MCF 10A (cell line): ENCODE measurements at regions of chr12 and their contacts with region 1.

Region 1: GRCh38 chr12:1093166-1093751 is 102.2 kb downstream of the ERC1 start:
- DNase-seq: peak; percentile 75
- H3K4me3 Mint-ChIP-seq: no peak overlapping the region
- H3K27ac Mint-ChIP-seq: no peak overlapping the region
- H3K4me1 Mint-ChIP-seq: peaks cover 10% of the 10 kb centered on the region
- H3K27me3 Mint-ChIP-seq: no peaks in the 10 kb centered on the region
- CTCF ChIP-seq: peak; percentile 75

Region 2: DNA sequence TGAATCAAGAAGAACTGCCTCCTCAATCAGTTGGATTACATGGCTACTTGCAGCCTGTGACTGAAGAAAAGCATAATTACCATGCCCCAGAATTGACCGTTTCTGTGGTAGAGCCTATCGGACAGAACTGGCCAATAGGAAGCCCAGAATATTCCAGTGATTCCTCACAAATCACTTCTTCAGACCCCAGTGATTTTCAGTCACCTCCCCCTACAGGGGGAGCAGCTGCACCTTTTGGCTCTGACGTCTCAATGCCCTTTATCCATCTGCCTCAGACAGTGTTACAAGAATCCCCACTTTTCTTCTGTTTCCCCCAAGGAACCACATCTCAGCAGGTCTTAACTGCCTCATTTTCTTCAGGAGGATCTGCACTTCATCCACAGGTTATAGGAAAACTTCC is 224.5 kb before region 1 on chr12:
- CTCF ChIA-PET with region 1: no interaction called
- POLR2A ChIA-PET with region 1: no interaction called
- intact Hi-C with region 1: no loop called
- DNase-seq: no peak
- H3K4me3 Mint-ChIP-seq: no peak overlapping the region
- H3K27ac Mint-ChIP-seq: no peak overlapping the region
- H3K4me1 Mint-ChIP-seq: no peaks in the 10 kb centered on the region
- H3K27me3 Mint-ChIP-seq: no peaks in the 10 kb centered on the region
- CTCF ChIP-seq: no peak

Region 3: DNA sequence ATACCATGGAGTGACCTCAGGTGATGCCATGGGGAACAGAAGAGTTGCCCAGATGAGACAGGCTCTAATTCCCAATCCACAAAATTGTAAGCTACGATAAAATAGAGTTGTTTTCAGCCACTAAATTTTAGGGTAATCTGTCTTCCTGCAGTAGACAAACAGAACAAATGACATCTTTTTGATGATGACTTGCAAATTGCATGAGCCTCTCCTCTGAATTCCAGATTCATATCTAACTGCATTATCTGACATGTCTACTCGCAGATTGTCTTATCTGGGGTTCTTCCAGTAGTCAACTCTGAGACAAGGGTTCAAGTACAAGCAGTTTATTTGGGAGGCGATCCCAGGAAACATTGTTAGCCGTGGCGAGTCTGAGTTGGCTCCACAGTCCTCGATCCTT is 116.6 kb before region 1 on chr12:
- CTCF ChIA-PET with region 1: interaction called, 10 read pairs
- POLR2A ChIA-PET with region 1: no interaction called
- intact Hi-C with region 1: no loop called
- DNase-seq: no peak
- H3K4me3 Mint-ChIP-seq: no peak overlapping the region
- H3K27ac Mint-ChIP-seq: no peak overlapping the region
- H3K4me1 Mint-ChIP-seq: peaks cover 5% of the 10 kb centered on the region
- H3K27me3 Mint-ChIP-seq: no peaks in the 10 kb centered on the region
- CTCF ChIP-seq: no peak

Region 4: GRCh38 chr12:1078002-1078401 is 15.3 kb before region 1 on chr12:
- CTCF ChIA-PET with region 1: interaction called, 28 read pairs
- POLR2A ChIA-PET with region 1: no interaction called
- intact Hi-C with region 1: no loop called
- DNase-seq: no peak
- H3K4me3 Mint-ChIP-seq: no peak overlapping the region
- H3K27ac Mint-ChIP-seq: no peak overlapping the region
- H3K4me1 Mint-ChIP-seq: no peaks in the 10 kb centered on the region
- H3K27me3 Mint-ChIP-seq: no peaks in the 10 kb centered on the region
- CTCF ChIP-seq: no peak

Region 5: GRCh38 chr12:1776170-1776948 is 683.1 kb after region 1 on chr12:
- CTCF ChIA-PET with region 1: no interaction called
- POLR2A ChIA-PET with region 1: no interaction called
- intact Hi-C with region 1: no loop called
- DNase-seq: peak; percentile 89
- H3K4me3 Mint-ChIP-seq: peak overlapping the region; percentile 0
- H3K27ac Mint-ChIP-seq: peak overlapping the region; percentile 11
- H3K4me1 Mint-ChIP-seq: peaks cover 49% of the 10 kb centered on the region
- H3K27me3 Mint-ChIP-seq: no peaks in the 10 kb centered on the region
- CTCF ChIP-seq: no peak